HEK293T (cell line): ENCODE measurements at regions of chr11 and their contacts with region 1.

Region 1: GRCh38 chr11:64317957-64318693 is at the start of gene PRDX5:
- DNase-seq: peak; percentile 96

Region 2: DNA sequence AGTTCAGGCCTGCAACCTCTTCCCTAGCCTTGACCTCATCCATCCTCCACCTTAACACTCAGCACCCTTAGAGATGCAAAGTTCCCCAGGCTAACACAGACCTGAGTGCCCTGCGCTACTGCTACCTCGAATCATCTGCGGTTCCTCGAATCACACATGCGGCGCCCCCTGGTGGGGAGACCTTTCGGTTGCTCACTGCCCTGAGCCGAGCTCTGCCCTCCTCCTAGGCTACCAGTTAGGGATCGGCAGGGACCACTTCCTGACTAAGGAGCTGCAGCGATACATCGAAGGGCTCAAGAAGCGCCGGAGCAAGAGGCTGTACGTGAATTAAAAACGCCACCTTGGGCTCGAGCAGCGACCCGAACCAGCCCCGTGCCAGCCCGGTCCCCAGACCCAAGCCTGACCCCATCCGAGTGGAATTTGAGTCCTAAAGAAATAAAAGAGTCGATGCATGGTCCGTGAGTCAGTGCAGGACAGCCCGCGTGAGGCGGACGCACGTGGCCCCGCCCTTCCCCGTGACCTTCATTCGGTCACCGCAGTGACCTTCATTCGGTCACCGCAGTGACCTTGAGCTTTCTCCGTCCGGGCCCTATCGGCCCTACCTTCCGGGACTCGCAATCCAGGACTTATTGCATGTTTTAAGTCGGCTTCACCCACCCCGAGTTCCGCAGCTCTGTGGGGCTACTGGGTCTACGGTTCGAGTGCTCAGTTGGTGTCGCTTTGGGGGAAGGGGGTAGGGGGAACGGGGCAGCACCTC is 13.6 kb before region 1 on chr11:
- CTCF ChIA-PET with region 1: interaction called, 17 read pairs
- POLR2A ChIA-PET with region 1: interaction called, 49 read pairs
- DNase-seq: peak; percentile 81

Region 3: GRCh38 chr11:64331557-64332371 is 13.6 kb after region 1 on chr11:
- CTCF ChIA-PET with region 1: interaction called, 13 read pairs
- POLR2A ChIA-PET with region 1: interaction called, 60 read pairs
- DNase-seq: peak; percentile 59

Region 4: GRCh38 chr11:64341851-64342791 is 24.0 kb after region 1 on chr11:
- CTCF ChIA-PET with region 1: interaction called, 7 read pairs
- POLR2A ChIA-PET with region 1: interaction called, 46 read pairs
- DNase-seq: peak; percentile 91